ENCODE measurements at regions of chr1 and their contacts with region 1.

Region 1: GRCh38 chr1:193025218-193025617 is 33.9 kb downstream of the UCHL5 start:
- DNase-seq: no peak
- H3K4me3 ChIP-seq: no peak overlapping the region
- H3K27ac ChIP-seq: no peak overlapping the region
- H3K4me1 ChIP-seq: no peaks in the 10 kb centered on the region
- H3K27me3 ChIP-seq: no peaks in the 10 kb centered on the region

Region 2: DNA sequence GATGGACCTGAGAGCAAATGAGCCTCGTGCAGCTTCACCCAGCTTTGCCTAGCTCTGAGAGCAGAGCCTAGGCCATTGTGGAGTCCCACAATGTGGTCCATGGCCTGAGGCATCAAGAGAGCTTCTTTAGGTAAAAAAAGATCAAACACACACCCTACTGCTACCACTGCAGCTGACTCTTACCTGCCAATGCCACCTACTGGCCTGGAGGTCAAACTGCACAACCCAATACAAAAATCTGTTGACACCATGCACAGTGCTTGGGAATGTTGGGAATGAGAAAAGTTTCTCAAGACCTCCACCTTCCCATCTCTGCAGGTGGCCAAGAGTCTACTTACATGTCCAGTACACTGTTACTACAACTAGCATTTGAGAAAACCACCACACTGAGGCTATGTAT is 26.7 kb before region 1 on chr1:
- CTCF ChIA-PET with region 1: no interaction called
- POLR2A ChIA-PET with region 1: no interaction called
- DNase-seq: no peak
- H3K4me3 ChIP-seq: no peak overlapping the region
- H3K27ac ChIP-seq: no peak overlapping the region
- H3K4me1 ChIP-seq: no peaks in the 10 kb centered on the region
- H3K27me3 ChIP-seq: no peaks in the 10 kb centered on the region

Region 3: GRCh38 chr1:193014400-193014799 is 10.8 kb before region 1 on chr1:
- CTCF ChIA-PET with region 1: interaction called, 10 read pairs
- POLR2A ChIA-PET with region 1: no interaction called
- DNase-seq: no peak
- H3K4me3 ChIP-seq: no peak overlapping the region
- H3K27ac ChIP-seq: no peak overlapping the region
- H3K4me1 ChIP-seq: no peaks in the 10 kb centered on the region
- H3K27me3 ChIP-seq: no peaks in the 10 kb centered on the region

Region 4: GRCh38 chr1:193348091-193348768 is 323.0 kb after region 1 on chr1:
- CTCF ChIA-PET with region 1: no interaction called
- POLR2A ChIA-PET with region 1: no interaction called
- DNase-seq: no peak
- H3K4me3 ChIP-seq: no peak overlapping the region
- H3K27ac ChIP-seq: no peak overlapping the region
- H3K4me1 ChIP-seq: no peaks in the 10 kb centered on the region
- H3K27me3 ChIP-seq: no peaks in the 10 kb centered on the region

Measured in common myeloid progenitor, CD34-positive (primary cell).